ENCODE measurements at regions of chr12 and their contacts with region 1.

Region 1: GRCh38 chr12:107296681-107297089 is 203.3 kb upstream of the CRY1 start:
- DNase-seq: no peak
- ATAC-seq: no peak
- H3K4me3 ChIP-seq: no peak overlapping the region
- H3K27ac ChIP-seq: no peak overlapping the region
- H3K4me1 ChIP-seq: no peaks in the 10 kb centered on the region
- H3K27me3 ChIP-seq: peaks cover 3% of the 10 kb centered on the region; the same call in 1 of the 2 replicates
- CTCF ChIP-seq: no peak
- POLR2A ChIP-seq: no peak
- RAD21 ChIP-seq: no peak

Region 2: DNA sequence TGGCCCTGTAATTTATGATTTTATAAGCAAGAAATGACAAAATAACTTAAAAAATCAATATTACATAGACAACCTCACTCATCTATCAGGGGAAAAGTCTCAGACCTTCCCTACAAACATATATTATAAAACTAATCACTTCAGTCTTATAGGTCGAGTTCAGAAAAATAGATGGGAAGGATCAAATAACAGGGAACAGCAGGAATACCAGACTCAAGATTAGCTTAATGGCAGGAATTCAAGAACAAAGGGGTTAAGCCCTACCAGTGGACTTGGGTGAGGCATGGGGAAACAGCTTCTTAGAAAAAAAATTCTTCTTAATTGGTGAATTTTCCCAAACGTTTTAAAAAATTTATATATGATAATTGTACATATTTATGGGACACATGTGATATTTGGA is 151.7 kb before region 1 on chr12:
- CTCF ChIA-PET with region 1: no interaction called
- POLR2A ChIA-PET with region 1: no interaction called
- dilution Hi-C with region 1: no loop called
- in situ Hi-C with region 1: no loop called
- intact Hi-C with region 1: loop called (anchors 5 kb)
- DNase-seq: no peak
- ATAC-seq: no peak
- H3K4me3 ChIP-seq: no peak overlapping the region
- H3K27ac ChIP-seq: no peak overlapping the region
- H3K4me1 ChIP-seq: no peaks in the 10 kb centered on the region
- H3K27me3 ChIP-seq: no peaks in the 10 kb centered on the region
- CTCF ChIP-seq: no peak
- POLR2A ChIP-seq: no peak
- RAD21 ChIP-seq: no peak